ENCODE measurements at regions of chr14 and their contacts with region 1.

Region 1: DNA sequence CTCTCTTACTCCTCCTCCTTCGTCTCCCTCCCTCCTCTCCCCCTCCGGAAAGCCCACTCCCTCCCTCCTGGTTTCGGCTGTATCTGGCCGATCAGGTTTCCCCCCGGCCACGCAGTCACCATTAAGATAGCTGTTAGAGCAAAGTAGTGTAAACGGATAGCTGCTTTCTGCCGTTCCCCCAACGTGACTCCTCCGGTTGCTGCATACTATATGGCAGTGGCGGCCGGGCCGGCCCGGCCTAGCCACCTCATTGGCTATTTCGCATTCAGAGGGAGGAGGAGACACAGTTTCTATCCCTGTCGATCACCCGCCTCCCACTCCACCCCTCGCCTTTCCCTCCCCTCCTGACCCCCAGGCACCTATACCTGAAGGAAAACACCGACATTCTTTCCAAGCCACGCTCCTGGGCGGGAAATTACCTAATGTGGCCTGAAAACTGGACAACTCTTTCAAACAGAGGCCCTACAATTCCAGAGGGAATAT is at the start of gene SIX4:
- DNase-seq: peak; percentile 47
- ATAC-seq: peak; percentile 38
- H3K4me3 Mint-ChIP-seq: peak within 1 kb of the TSS; percentile 77
- H3K27ac Mint-ChIP-seq: no peak within 1 kb of the TSS
- H3K4me1 Mint-ChIP-seq: peaks cover 16% of the 10 kb centered on the region
- H3K27me3 Mint-ChIP-seq: peaks cover 68% of the 10 kb centered on the region
- total RNA-seq, gene SIX4: 0.11 TPM in 1 of 2 experiments, not detected in the other

Region 2: GRCh38 chr14:60656686-60657455 is 67.3 kb before region 1 on chr14:
- CTCF ChIA-PET with region 1: no interaction called
- POLR2A ChIA-PET with region 1: no interaction called
- intact Hi-C with region 1: loop called (anchors 2 to 5 kb)
- DNase-seq: peak; percentile 55
- ATAC-seq: peak; percentile 66
- H3K4me3 Mint-ChIP-seq: peak overlapping the region; percentile 71
- H3K27ac Mint-ChIP-seq: no peak overlapping the region
- H3K4me1 Mint-ChIP-seq: peaks cover 37% of the 10 kb centered on the region
- H3K27me3 Mint-ChIP-seq: peaks cover 79% of the 10 kb centered on the region

Region 3: GRCh38 chr14:60734465-60735242 is 10.5 kb after region 1 on chr14 and contains the start of gene MNAT1:
- CTCF ChIA-PET with region 1: interaction called, 3 read pairs
- POLR2A ChIA-PET with region 1: no interaction called
- intact Hi-C with region 1: loop called in 1 of 2 experiments (anchors 1 kb)
- DNase-seq: peak; percentile 88
- ATAC-seq: peak; percentile 96
- H3K4me3 Mint-ChIP-seq: peak within 1 kb of the TSS; percentile 99
- H3K27ac Mint-ChIP-seq: peak within 1 kb of the TSS; percentile 86
- H3K4me1 Mint-ChIP-seq: peaks cover 18% of the 10 kb centered on the region
- H3K27me3 Mint-ChIP-seq: peaks cover 15% of the 10 kb centered on the region
- total RNA-seq, gene MNAT1: 36.2 to 40.3 TPM